ENCODE measurements at regions of chr5 and their contacts with region 1.

Region 1: GRCh38 chr5:88883059-88883835 is at the start of gene MEF2C:
- DNase-seq: peak; percentile 83
- ATAC-seq: peak; percentile 64
- H3K4me3 ChIP-seq: peak within 1 kb of the TSS; percentile 85
- H3K27ac ChIP-seq: peak within 1 kb of the TSS; percentile 56
- H3K4me1 ChIP-seq: peaks cover 38% of the 10 kb centered on the region
- H3K27me3 ChIP-seq: no peaks in the 10 kb centered on the region
- CTCF ChIP-seq: no peak
- total RNA-seq, gene MEF2C: 4.4 and 8.0 TPM in 2 replicates

Region 2: GRCh38 chr5:88967633-88968585 is 84.7 kb after region 1 on chr5:
- CTCF ChIA-PET with region 1: no interaction called
- POLR2A ChIA-PET with region 1: no interaction called
- intact Hi-C with region 1: loop called (anchors 5 kb)
- DNase-seq: no peak
- ATAC-seq: no peak
- H3K4me3 ChIP-seq: no peak overlapping the region
- H3K27ac ChIP-seq: no peak overlapping the region
- H3K4me1 ChIP-seq: peaks cover 24% of the 10 kb centered on the region
- H3K27me3 ChIP-seq: no peaks in the 10 kb centered on the region
- CTCF ChIP-seq: no peak

Region 3: DNA sequence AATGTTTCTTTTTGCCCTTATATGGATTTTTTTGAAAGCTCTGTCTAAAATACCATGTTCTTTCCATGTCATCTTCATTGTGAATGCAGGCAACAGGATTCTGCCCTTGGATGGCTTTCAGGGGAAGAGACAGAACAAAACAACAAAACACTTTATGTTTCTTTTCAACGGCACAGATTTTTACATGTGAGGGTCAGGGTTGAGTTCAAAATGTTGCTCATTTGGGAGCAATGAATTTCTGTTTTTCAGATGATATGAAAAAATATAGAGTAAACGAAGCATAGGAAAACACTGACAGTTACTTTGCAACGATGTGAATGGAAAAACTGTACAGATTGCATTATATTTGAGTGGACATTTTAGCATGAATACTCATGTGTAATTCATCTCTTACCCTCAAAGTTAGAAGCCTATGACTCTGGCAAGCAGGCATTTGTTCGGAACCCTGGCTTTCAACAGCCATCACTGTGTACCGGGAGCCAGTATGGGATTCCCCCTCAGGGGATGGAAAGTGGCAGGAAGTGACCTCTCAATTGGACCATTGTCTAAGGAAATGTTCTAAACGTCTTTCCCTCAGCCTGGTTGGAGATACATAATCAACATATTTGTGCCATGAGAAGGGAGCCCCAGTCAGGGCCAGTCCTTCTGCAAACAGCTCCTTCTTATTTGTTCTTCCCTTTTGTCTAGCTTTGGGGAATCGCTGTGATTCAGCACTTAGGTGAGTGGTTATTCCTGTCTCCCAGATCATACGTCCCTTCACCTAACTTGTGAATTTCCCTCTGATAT is 153.7 kb after region 1 on chr5:
- CTCF ChIA-PET with region 1: no interaction called
- POLR2A ChIA-PET with region 1: interaction called, 3 read pairs
- intact Hi-C with region 1: loop called (anchors 1 kb)
- DNase-seq: peak; percentile 97
- ATAC-seq: peak; percentile 73
- H3K4me3 ChIP-seq: peak overlapping the region; percentile 22; the same call in 1 of the 2 replicates
- H3K27ac ChIP-seq: peak overlapping the region; percentile 97
- H3K4me1 ChIP-seq: peaks cover 48% of the 10 kb centered on the region
- H3K27me3 ChIP-seq: no peaks in the 10 kb centered on the region
- CTCF ChIP-seq: no peak

Region 4: DNA sequence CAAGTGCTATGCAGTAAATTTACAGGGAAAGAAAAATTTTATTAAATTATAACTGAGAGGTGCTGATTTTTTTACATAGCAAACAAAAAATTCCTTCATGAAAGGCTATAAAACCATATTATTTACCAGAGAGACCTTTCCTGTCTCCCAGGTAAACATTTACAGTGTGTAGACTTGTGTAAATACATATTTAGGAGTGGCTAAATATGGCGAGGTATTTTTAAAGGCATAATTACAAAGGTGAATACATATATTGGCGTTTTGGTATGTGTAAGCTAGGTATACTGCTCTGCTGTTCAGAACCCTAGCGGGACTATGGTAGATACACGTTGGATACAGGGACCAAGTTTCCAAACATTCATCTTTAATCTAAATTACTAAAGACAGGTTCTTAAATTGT is 170.3 kb after region 1 on chr5:
- CTCF ChIA-PET with region 1: no interaction called
- POLR2A ChIA-PET with region 1: no interaction called
- intact Hi-C with region 1: loop called (anchors 5 kb)
- DNase-seq: peak; percentile 80
- ATAC-seq: peak; percentile 99
- H3K4me3 ChIP-seq: no peak overlapping the region
- H3K27ac ChIP-seq: peak overlapping the region; percentile 59
- H3K4me1 ChIP-seq: peaks cover 22% of the 10 kb centered on the region
- H3K27me3 ChIP-seq: no peaks in the 10 kb centered on the region
- CTCF ChIP-seq: no peak

Region 5: DNA sequence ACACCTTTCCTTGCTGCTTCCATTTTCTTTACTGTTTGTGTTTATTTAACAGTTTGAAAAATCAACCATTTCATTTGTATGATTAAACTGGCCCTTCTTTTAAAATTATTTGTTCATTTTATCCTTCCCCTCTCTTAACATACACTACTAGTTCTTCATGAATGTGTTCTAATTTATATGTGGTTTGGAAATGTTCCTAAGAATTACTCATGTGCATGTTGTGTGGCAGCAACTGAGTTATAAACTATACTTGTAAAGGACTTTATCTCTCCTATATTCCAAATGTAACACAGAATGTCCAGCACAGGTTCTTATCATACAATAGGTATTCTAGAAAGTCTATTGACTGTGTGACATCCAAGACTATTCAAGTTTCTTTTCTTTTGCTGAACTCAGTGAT is 357.9 kb after region 1 on chr5:
- CTCF ChIA-PET with region 1: no interaction called
- POLR2A ChIA-PET with region 1: no interaction called
- intact Hi-C with region 1: loop called (anchors 2 kb)
- DNase-seq: peak; percentile 73
- ATAC-seq: peak; percentile 65
- H3K4me3 ChIP-seq: no peak overlapping the region
- H3K27ac ChIP-seq: peak overlapping the region; percentile 28
- H3K4me1 ChIP-seq: peaks cover 35% of the 10 kb centered on the region
- H3K27me3 ChIP-seq: no peaks in the 10 kb centered on the region
- CTCF ChIP-seq: no peak

Region 6: DNA sequence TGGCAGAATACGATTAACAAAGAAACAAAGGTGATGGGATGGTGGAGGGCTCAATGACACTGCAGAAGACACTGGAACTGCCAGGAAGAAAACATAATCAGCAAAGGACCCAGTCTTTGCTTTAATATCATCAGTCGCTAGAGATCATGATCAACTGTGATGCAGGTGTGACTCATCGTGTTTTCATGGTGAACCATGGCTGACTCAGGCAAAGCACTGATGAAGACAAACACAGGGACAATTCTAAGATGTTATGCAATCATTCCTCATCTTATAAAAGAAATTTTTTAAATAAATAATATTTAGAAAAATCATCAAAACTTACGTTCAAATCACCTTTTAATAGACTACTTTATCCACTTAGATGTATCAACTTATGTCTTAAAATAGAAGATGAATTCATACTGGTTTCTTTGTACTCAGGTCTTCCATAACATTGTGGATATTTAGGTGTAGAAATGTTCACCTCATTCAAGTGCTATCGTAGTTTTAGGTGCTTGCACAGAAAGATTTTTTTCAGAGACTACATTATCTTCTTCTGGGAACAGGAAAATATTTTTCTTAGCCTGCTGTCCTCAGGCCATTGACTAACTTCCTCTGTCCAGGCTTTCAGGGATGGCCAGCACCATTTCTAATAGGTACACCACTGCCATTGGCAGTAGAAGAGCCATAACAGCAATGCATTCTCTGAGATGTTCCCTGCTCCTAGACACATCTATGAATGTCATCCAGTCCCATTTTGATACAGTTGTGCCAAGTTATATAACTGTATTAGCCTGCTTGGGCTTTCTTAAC is 673.2 kb after region 1 on chr5:
- CTCF ChIA-PET with region 1: no interaction called
- POLR2A ChIA-PET with region 1: no interaction called
- intact Hi-C with region 1: loop called (anchors 5 kb)
- DNase-seq: peak; percentile 96
- ATAC-seq: peak; percentile 98
- H3K4me3 ChIP-seq: peak overlapping the region; percentile 6; the same call in 1 of the 2 replicates
- H3K27ac ChIP-seq: peak overlapping the region; percentile 86
- H3K4me1 ChIP-seq: peaks cover 20% of the 10 kb centered on the region
- H3K27me3 ChIP-seq: no peaks in the 10 kb centered on the region
- CTCF ChIP-seq: no peak